ENCODE measurements at regions of chr5 and their contacts with region 1.

Region 1: GRCh38 chr5:124748687-124749594 is 2.5 kb upstream of the ZNF608 start:
- DNase-seq: peak; percentile 80
- H3K4me3 ChIP-seq: peak overlapping the region; percentile 67 to 92
- H3K27ac ChIP-seq: peak overlapping the region; percentile 85 to 97
- H3K4me1 ChIP-seq: peaks cover 0 to 19% of the 10 kb centered on the region in 2 experiments; a peak in 2 of 4 replicates
- H3K27me3 ChIP-seq: no peaks in the 10 kb centered on the region
- CTCF ChIP-seq: no peak
- EP300 ChIP-seq: peak in 1 of 2 experiments; percentile 13; a peak in 2 of 4 replicates
- RAD21 ChIP-seq: peak; percentile 42

Region 2: GRCh38 chr5:124796495-124796894 is 47.6 kb after region 1 on chr5:
- CTCF ChIA-PET with region 1: no interaction called
- POLR2A ChIA-PET with region 1: no interaction called
- DNase-seq: no peak
- H3K4me3 ChIP-seq: no peak overlapping the region
- H3K27ac ChIP-seq: no peak overlapping the region
- H3K4me1 ChIP-seq: no peaks in the 10 kb centered on the region
- H3K27me3 ChIP-seq: no peaks in the 10 kb centered on the region
- CTCF ChIP-seq: no peak
- EP300 ChIP-seq: no peak
- RAD21 ChIP-seq: no peak

Region 3: GRCh38 chr5:124859027-124859426 is 110.1 kb after region 1 on chr5:
- CTCF ChIA-PET with region 1: no interaction called
- POLR2A ChIA-PET with region 1: interaction called, 12 read pairs
- DNase-seq: peak; percentile 64
- H3K4me3 ChIP-seq: no peak overlapping the region
- H3K27ac ChIP-seq: peak overlapping the region in 1 of 2 experiments; percentile 64; a peak in 2 of 4 replicates
- H3K4me1 ChIP-seq: peaks cover 0 to 12% of the 10 kb centered on the region in 2 experiments; a peak in 2 of 4 replicates
- H3K27me3 ChIP-seq: no peaks in the 10 kb centered on the region
- CTCF ChIP-seq: no peak
- EP300 ChIP-seq: no peak; a peak in 1 of 4 replicates
- RAD21 ChIP-seq: peak; percentile 38; the same call in 1 of the 2 replicates

Region 4: DNA sequence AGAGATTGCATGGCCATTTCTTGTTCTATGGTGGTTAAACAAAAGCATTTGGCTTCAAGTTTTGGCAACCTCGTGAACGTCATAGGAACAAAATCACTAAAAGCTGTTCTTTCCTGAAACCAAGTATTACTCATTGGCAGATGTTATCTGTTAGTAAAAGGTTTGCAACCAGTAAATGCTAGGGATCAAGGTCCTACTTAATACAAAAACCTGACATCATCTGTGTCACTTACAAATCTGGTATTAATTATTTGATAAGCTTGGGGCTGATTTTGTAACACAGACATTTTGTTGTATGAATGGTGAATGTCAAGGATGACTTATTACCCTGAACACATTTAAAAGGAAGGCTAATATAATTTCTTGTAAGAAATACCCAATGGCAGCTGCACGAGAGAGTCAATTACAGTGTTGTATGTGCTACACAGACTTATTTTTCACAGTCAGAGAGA is 483.9 kb after region 1 on chr5:
- CTCF ChIA-PET with region 1: no interaction called
- POLR2A ChIA-PET with region 1: interaction called, 11 read pairs
- DNase-seq: peak; percentile 61
- H3K4me3 ChIP-seq: no peak overlapping the region
- H3K27ac ChIP-seq: peak overlapping the region; percentile 85 to 88
- H3K4me1 ChIP-seq: peaks cover 3 to 13% of the 10 kb centered on the region in 2 experiments; a peak in 2 of 4 replicates
- H3K27me3 ChIP-seq: no peaks in the 10 kb centered on the region
- CTCF ChIP-seq: no peak
- EP300 ChIP-seq: peak; percentile 99
- RAD21 ChIP-seq: peak; percentile 46; the same call in 1 of the 2 replicates

Region 5: GRCh38 chr5:125412561-125413495 is 663.9 kb after region 1 on chr5:
- CTCF ChIA-PET with region 1: interaction called, 4 read pairs
- POLR2A ChIA-PET with region 1: interaction called, 61 read pairs
- DNase-seq: peak; percentile 73
- H3K4me3 ChIP-seq: peak overlapping the region; percentile 22 to 31; a peak in 3 of 4 replicates
- H3K27ac ChIP-seq: peak overlapping the region; percentile 93 to 98
- H3K4me1 ChIP-seq: peaks cover 51 to 58% of the 10 kb centered on the region in 2 experiments
- H3K27me3 ChIP-seq: no peaks in the 10 kb centered on the region
- CTCF ChIP-seq: peak; percentile 59
- EP300 ChIP-seq: peak in 1 of 2 experiments; percentile 92; a peak in 3 of 4 replicates
- RAD21 ChIP-seq: peak; percentile 84

Measured in SK-N-SH (cell line).